B cell (primary cell): ENCODE measurements at regions of chr2 and their contacts with region 1.

Region 1: GRCh38 chr2:42954227-42954962 is 162.0 kb upstream of the HAAO start:
- DNase-seq: no peak
- ATAC-seq: no peak
- H3K4me3 ChIP-seq: no peak overlapping the region
- H3K4me3 Mint-ChIP-seq: no peak overlapping the region
- H3K27ac ChIP-seq: no peak overlapping the region
- H3K27ac Mint-ChIP-seq: peak overlapping the region; percentile 55
- H3K4me1 ChIP-seq: peaks cover 28 to 34% of the 10 kb centered on the region in 2 donors
- H3K4me1 Mint-ChIP-seq: peaks cover 42% of the 10 kb centered on the region
- H3K27me3 ChIP-seq: no peaks in the 10 kb centered on the region
- H3K27me3 Mint-ChIP-seq: no peaks in the 10 kb centered on the region
- CTCF ChIP-seq: no peak

Region 2: DNA sequence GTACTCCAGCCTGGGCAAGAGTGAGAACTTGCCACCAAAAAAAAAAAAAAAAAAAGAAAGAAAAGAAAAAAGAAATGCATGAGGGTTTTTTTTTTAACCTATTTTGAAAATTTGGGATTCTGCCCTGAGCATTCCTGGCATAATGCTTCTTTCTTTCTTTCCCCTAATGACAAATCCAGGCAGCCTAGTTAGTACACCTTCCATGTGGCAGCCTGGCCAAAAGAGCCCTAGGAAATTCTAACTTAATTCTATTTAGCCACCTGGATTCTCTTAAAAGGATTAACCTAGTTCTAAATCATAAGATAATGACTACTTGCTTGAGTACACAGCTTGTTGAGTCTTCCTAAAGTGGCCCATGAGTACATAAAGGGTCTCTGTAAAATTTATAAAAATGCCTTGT is 481.4 kb after region 1 on chr2:
- CTCF ChIA-PET with region 1: no interaction called
- POLR2A ChIA-PET with region 1: interaction called, 10 read pairs
- intact Hi-C with region 1: no loop called
- DNase-seq: no peak
- ATAC-seq: no peak
- H3K4me3 ChIP-seq: no peak overlapping the region
- H3K4me3 Mint-ChIP-seq: no peak overlapping the region
- H3K27ac ChIP-seq: no peak overlapping the region
- H3K27ac Mint-ChIP-seq: no peak overlapping the region
- H3K4me1 ChIP-seq: no peaks in the 10 kb centered on the region
- H3K4me1 Mint-ChIP-seq: no peaks in the 10 kb centered on the region
- H3K27me3 ChIP-seq: no peaks in the 10 kb centered on the region
- H3K27me3 Mint-ChIP-seq: no peaks in the 10 kb centered on the region
- CTCF ChIP-seq: no peak